ENCODE measurements at regions of chr5 and their contacts with region 1.

Region 1: DNA sequence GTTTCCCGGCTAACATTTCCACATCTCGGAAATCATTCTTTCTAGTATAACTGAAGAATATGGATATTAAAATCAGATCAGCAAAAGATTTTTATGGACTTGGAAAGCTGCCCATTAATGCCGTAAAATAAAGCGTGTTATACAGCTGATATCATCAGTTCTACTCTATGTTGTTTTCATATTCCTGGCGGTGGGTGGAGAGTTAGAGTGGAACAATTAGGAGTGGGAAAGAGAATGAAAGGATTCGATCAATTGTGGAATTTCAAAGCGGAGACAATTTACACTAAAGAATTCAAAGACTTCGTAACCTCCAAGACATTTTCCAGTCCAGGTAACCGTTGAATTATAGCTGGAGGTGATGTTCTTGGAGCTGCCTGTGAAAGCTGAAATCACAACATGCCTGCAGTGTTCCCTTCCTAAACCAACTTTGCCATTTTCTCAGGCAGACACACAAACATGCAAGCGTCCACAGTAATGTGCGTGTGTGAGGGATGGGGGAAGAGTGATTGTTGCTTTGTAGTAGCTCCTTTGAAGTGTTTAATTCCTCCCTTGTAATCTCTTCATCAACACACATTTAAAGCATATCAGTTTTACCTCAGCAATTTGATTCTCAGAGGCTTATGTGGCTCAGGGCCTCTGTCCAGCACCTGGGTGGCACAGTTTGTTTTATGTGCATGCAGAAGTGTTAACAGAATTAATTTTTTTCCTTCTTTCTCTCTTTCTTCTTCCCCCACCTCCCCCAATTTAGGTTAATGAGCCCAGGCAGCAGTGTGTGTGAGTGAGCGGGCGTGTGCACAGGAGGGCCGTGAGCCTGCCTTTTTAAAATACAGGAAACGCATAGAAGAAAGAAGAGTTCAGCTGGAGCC is 544.1 kb downstream of the RAB3C start:
- DNase-seq: peak in 1 of 2 experiments; percentile 87
- ATAC-seq: peak; percentile 30 to 57
- H3K4me3 ChIP-seq: peak overlapping the region; percentile 0; the same call in 1 of the 3 replicates
- H3K27ac ChIP-seq: peak overlapping the region; percentile 94 to 100
- H3K4me1 ChIP-seq: peaks cover 94% of the 10 kb centered on the region
- CTCF ChIP-seq: no peak
- EP300 ChIP-seq: no peak
- POLR2A ChIP-seq: no peak
- RAD21 ChIP-seq: no peak

Region 2: DNA sequence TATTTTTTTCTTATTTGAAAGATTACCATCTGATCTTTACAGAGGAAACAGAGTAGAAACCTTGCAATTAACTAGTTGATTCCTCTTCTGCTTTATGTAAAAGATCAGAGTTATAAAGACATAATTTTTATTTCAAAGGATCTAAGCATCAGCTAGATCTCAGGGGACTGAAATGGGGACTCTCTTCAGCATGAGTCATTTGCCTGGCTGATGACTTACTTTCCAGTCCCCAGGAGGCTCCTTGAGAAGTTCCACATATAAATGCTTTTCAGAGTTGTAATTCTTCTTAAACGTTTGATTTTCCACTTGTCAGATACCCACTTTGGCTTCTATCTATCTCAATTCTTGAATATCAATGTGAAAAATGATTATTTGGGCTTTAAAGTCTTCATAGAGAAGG is 154.6 kb before region 1 on chr5:
- CTCF ChIA-PET with region 1: no interaction called
- POLR2A ChIA-PET with region 1: no interaction called
- DNase-seq: no peak
- ATAC-seq: no peak
- H3K4me3 ChIP-seq: no peak overlapping the region
- H3K27ac ChIP-seq: peak overlapping the region; percentile 49 to 68; a peak in 5 of 6 replicates
- H3K4me1 ChIP-seq: peaks cover 99% of the 10 kb centered on the region
- CTCF ChIP-seq: no peak
- EP300 ChIP-seq: no peak
- POLR2A ChIP-seq: no peak
- RAD21 ChIP-seq: no peak

Region 3: DNA sequence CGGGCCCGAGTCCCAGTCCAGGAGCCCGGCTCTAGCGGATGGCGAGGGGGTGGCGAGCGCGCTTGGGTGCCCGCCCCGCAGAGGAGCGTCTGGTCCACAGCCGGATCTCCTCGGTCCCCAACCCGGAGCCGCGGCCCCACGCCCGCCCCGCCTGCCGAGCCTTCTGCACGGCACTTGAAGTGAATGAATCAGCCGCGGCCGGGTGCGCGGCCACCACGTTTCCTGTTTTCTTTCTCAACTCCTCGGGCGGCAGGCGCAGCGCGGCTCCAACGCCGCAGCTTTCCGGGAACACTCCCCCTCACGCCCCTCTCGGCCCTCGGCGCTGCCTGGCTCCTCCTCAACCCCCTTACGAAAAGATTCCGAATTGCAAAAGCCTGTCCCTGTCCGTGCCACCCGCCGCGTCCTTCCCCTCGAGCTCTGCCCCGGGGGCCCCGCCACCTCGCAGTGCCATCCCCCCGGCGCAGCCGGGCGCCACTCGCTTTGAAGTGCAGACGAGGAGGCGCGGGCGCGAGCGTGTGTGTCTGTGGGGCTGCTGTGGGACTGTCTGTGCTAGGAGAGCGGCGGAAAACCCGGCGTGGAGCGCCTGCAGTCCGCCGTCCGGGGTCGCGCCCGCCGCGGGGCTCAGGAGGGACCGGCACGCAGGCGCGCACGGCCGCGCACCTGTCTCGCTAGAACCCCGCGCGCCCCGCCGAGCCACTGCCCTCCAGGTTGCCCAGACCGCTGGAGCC is 87.5 kb before region 1 on chr5:
- CTCF ChIA-PET with region 1: interaction called, 9 read pairs
- POLR2A ChIA-PET with region 1: interaction called, 13 read pairs
- DNase-seq: peak in 1 of 2 experiments; percentile 85
- ATAC-seq: peak; percentile 63 to 68
- H3K4me3 ChIP-seq: peak overlapping the region; percentile 74
- H3K27ac ChIP-seq: peak overlapping the region; percentile 95 to 99
- H3K4me1 ChIP-seq: peaks cover 38% of the 10 kb centered on the region
- CTCF ChIP-seq: no peak
- EP300 ChIP-seq: peak; percentile 71 to 85; a peak in 3 of 5 replicates
- POLR2A ChIP-seq: peak; percentile 8; the same call in 1 of the 2 replicates
- RAD21 ChIP-seq: no peak; a peak in 1 of 5 replicates

Region 4: DNA sequence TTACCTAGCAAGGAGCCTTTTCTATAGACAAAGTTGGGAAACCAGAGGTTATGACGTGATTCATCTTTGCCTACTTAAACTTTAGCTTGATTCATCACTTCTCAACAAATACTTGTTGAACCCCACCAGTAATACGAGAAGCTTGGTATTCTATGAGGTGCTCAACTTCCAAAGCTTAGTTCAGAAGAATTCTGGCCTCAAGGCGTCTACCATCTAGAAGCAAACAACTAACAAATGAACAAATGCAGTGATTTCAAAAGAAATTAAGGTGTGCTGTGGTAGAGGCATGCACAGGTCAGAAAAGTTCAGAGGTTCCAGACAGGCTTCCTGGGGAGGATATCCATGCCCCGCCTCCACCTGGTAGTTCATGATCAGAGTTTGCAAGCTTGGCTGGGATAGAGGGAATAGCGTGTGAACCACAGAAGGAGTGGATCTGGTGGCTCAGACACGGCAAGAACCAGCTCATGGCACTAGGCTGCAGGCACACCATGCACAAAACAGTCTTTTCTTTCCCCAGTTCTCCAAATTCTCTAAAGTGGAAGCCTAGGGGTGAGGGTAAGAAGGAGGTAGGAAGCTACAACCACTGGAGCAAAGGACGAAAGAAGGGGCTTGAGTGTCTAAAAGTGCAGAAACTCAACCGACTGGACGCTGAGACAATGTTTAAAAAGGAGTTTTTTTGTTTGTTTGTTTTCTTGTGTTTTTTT is 71.0 kb before region 1 on chr5:
- CTCF ChIA-PET with region 1: interaction called, 8 read pairs
- POLR2A ChIA-PET with region 1: interaction called, 17 read pairs
- DNase-seq: peak; percentile 40 to 99
- ATAC-seq: peak; percentile 89 to 93
- H3K4me3 ChIP-seq: no peak overlapping the region
- H3K27ac ChIP-seq: peak overlapping the region; percentile 95 to 98
- H3K4me1 ChIP-seq: peaks cover 97% of the 10 kb centered on the region
- CTCF ChIP-seq: no peak
- EP300 ChIP-seq: peak; percentile 99 to 100
- POLR2A ChIP-seq: no peak
- RAD21 ChIP-seq: peak; percentile 6 to 56; a peak in 3 of 5 replicates

Region 5: DNA sequence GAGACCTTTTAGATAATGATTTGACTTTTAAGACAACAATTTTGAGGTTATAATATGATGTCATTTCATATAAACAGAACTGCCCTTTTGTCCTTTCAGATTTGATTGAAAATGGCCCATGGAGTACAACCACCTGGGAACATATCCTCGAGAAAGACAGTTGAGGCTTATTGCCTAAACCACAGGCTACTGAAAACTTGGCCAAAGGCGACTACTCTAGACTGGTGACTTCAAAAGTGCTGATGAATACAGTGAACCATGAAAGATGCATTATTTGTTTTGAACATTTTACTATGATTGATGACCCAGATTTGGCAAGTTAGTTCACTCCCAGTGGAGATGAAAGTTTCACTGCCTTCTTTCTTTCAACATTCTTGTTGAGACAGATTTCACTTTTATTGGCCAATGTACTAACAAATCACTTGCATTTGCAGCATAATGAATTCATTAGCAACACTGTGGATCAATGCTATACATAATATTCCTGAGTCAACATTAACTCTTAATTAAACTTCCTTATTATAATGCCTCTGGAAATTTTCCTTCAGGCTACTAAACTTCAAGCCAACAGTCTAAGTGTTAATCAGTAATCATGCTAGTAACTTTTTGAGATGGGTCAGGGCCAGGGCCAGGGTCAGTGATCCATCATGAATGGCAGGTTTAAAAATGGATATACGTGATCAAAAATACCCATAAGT is 63.8 kb before region 1 on chr5:
- CTCF ChIA-PET with region 1: no interaction called
- POLR2A ChIA-PET with region 1: interaction called, 15 read pairs
- DNase-seq: peak; percentile 35 to 97
- ATAC-seq: peak; percentile 45 to 69
- H3K4me3 ChIP-seq: no peak overlapping the region; the same call in 2 of the 3 replicates
- H3K27ac ChIP-seq: peak overlapping the region; percentile 95 to 98
- H3K4me1 ChIP-seq: peaks cover 100% of the 10 kb centered on the region
- CTCF ChIP-seq: no peak
- EP300 ChIP-seq: peak; percentile 96 to 99
- POLR2A ChIP-seq: no peak
- RAD21 ChIP-seq: no peak; a peak in 3 of 5 replicates

Region 6: GRCh38 chr5:59095480-59095879 is 31.5 kb before region 1 on chr5:
- CTCF ChIA-PET with region 1: interaction called, 6 read pairs
- POLR2A ChIA-PET with region 1: interaction called, 12 read pairs
- DNase-seq: no peak
- ATAC-seq: no peak
- H3K4me3 ChIP-seq: no peak overlapping the region
- H3K27ac ChIP-seq: peak overlapping the region; percentile 90 to 98
- H3K4me1 ChIP-seq: peaks cover 92% of the 10 kb centered on the region
- CTCF ChIP-seq: no peak
- EP300 ChIP-seq: no peak
- POLR2A ChIP-seq: no peak
- RAD21 ChIP-seq: no peak

Region 7: GRCh38 chr5:59149271-59149670 is 22.3 kb after region 1 on chr5:
- CTCF ChIA-PET with region 1: no interaction called
- POLR2A ChIA-PET with region 1: no interaction called
- DNase-seq: no peak
- ATAC-seq: no peak
- H3K4me3 ChIP-seq: no peak overlapping the region
- H3K27ac ChIP-seq: peak overlapping the region in 1 of 2 experiments; percentile 75; a peak in 3 of 6 replicates
- H3K4me1 ChIP-seq: peaks cover 73% of the 10 kb centered on the region
- CTCF ChIP-seq: no peak
- EP300 ChIP-seq: no peak
- POLR2A ChIP-seq: no peak
- RAD21 ChIP-seq: no peak

Region 8: GRCh38 chr5:59182760-59183159 is 55.8 kb after region 1 on chr5:
- CTCF ChIA-PET with region 1: no interaction called
- POLR2A ChIA-PET with region 1: no interaction called
- DNase-seq: no peak
- ATAC-seq: no peak; a peak in 2 of 6 replicates
- H3K4me3 ChIP-seq: no peak overlapping the region
- H3K27ac ChIP-seq: peak overlapping the region; percentile 21 to 50; a peak in 4 of 6 replicates
- H3K4me1 ChIP-seq: peaks cover 70% of the 10 kb centered on the region
- CTCF ChIP-seq: no peak
- EP300 ChIP-seq: no peak
- POLR2A ChIP-seq: no peak
- RAD21 ChIP-seq: no peak